Activated T-helper 1 cell treated with anti-CD3 and anti-CD28 coated beads, Interleukin-12 subunit alpha, Interleukin-12 subunit beta, Interleukin-2, Interleukin-4 antibody, amounts not matched to agents 30 ng/mL and 10 ng/mL and 1 ng/mL, durations not matched to agents 14 hours and 24 hours and 36 hours (primary cell): ENCODE measurements at regions of chr9 and their contacts with region 1.

Region 1: GRCh38 chr9:100011062-100011681 is 87.6 kb downstream of the ERP44 start:
- DNase-seq: peak; percentile 23
- H3K4me3 Mint-ChIP-seq: no peak overlapping the region
- H3K27ac Mint-ChIP-seq: no peak overlapping the region
- H3K4me1 Mint-ChIP-seq: no peaks in the 10 kb centered on the region
- H3K27me3 Mint-ChIP-seq: no peaks in the 10 kb centered on the region

Region 2: GRCh38 chr9:99162759-99163364 is 848.3 kb before region 1 on chr9:
- intact Hi-C with region 1: loop called (anchors 1 kb)
- DNase-seq: no peak
- H3K4me3 Mint-ChIP-seq: no peak overlapping the region
- H3K27ac Mint-ChIP-seq: no peak overlapping the region
- H3K4me1 Mint-ChIP-seq: peaks cover 25% of the 10 kb centered on the region
- H3K27me3 Mint-ChIP-seq: peaks cover 9% of the 10 kb centered on the region

Region 3: GRCh38 chr9:99231711-99232110 is 779.5 kb before region 1 on chr9:
- intact Hi-C with region 1: loop called (anchors 1 kb)
- DNase-seq: no peak
- H3K4me3 Mint-ChIP-seq: no peak overlapping the region
- H3K27ac Mint-ChIP-seq: no peak overlapping the region
- H3K4me1 Mint-ChIP-seq: peaks cover 51% of the 10 kb centered on the region
- H3K27me3 Mint-ChIP-seq: no peaks in the 10 kb centered on the region

Region 4: DNA sequence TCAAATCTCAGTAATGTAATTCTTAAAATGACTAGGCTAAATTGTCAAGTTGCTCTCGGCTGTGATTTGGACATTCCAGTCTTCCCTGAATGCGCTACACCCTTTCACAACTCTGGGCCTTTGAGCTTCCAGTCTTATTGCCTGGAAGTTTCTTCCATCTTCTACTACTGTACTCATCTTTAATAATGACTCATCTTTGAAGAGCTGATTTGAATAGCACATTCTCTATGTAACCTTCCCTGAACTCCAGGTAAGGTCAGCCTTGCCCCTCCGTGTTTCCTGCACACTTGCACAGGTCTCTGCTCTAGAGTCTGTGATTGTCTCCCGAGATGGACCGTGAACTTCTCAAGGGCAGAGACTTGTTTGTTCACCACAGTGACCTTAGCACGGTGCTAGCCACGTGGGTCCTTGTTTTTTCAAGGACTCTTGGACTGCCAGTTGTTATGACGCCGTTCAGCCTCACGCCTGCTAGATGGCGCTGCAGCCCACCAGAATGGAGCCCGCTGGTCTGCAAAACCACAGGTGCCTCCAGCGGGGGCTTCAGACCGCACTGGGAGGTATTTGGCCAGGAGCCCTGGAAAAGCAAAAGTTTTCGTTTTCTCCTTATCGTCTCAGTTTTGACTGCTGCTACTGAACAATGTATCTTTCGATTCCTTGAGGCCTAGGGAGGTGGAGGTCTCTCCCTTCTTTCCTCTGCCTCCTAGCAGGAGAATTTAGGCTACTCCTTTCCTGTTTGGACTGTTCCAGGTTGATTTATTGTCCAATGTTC is 744.7 kb before region 1 on chr9:
- intact Hi-C with region 1: loop called (anchors 1 kb)
- DNase-seq: peak; percentile 50
- H3K4me3 Mint-ChIP-seq: peak overlapping the region; percentile 3
- H3K27ac Mint-ChIP-seq: no peak overlapping the region
- H3K4me1 Mint-ChIP-seq: peaks cover 14% of the 10 kb centered on the region
- H3K27me3 Mint-ChIP-seq: peaks cover 14% of the 10 kb centered on the region